Activated CD4-positive, alpha-beta T cell treated with anti-CD3 and anti-CD28 coated beads for 36 hours (primary cell): ENCODE measurements at regions of chr5 and their contacts with region 1.

Region 1: DNA sequence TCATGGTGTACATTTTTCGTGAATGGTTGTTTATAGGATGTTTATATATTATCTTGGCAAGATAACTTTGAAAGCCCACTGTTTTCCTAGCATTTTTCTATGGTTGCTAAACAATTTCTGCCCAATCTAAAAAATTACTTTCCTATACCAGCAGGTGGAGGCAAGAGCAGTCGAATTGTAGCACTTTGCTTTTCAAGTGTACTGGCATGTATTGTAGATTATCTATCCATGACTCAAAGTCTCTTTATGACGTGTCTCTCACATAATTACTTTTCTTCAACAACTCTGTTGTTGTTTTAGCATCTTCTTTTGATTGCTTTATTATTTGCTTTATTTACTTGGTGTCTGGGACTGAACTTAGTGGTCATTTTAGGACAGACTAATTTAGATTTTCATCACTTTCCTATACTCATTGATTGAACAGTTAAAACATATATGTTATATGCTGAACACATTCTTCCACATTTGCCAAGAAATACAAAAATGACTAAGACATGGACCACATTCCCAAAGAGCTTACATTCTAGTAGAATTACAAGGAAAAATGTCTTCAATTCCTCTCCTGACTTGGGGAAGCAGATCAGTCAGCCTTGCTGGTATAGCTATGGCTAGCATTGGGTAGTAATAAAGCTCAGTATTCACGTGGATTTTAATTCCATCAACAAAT is 20.7 kb downstream of the NLN start:
- DNase-seq: peak; percentile 47
- ATAC-seq: peak; percentile 95
- H3K4me3 Mint-ChIP-seq: no peak overlapping the region
- H3K27ac Mint-ChIP-seq: no peak overlapping the region
- H3K4me1 Mint-ChIP-seq: peaks cover 15% of the 10 kb centered on the region
- H3K27me3 Mint-ChIP-seq: no peaks in the 10 kb centered on the region

Region 2: GRCh38 chr5:65801352-65801783 is 58.7 kb after region 1 on chr5:
- CTCF ChIA-PET with region 1: no interaction called
- POLR2A ChIA-PET with region 1: interaction called, 3 read pairs
- intact Hi-C with region 1: loop called in 1 of 2 experiments (anchors 2 kb)
- DNase-seq: no peak
- ATAC-seq: no peak
- H3K4me3 Mint-ChIP-seq: no peak overlapping the region
- H3K27ac Mint-ChIP-seq: no peak overlapping the region
- H3K4me1 Mint-ChIP-seq: peaks cover 37% of the 10 kb centered on the region
- H3K27me3 Mint-ChIP-seq: peaks cover 2% of the 10 kb centered on the region

Region 3: GRCh38 chr5:65867542-65868200 is 125.0 kb after region 1 on chr5:
- CTCF ChIA-PET with region 1: no interaction called
- POLR2A ChIA-PET with region 1: no interaction called
- intact Hi-C with region 1: loop called in 1 of 2 experiments (anchors 2 kb)
- DNase-seq: no peak
- ATAC-seq: no peak
- H3K4me3 Mint-ChIP-seq: peak overlapping the region; percentile 9
- H3K27ac Mint-ChIP-seq: peak overlapping the region; percentile 69
- H3K4me1 Mint-ChIP-seq: peaks cover 28% of the 10 kb centered on the region
- H3K27me3 Mint-ChIP-seq: no peaks in the 10 kb centered on the region

Region 4: GRCh38 chr5:66002415-66002814 is 259.7 kb after region 1 on chr5:
- CTCF ChIA-PET with region 1: no interaction called
- POLR2A ChIA-PET with region 1: no interaction called
- intact Hi-C with region 1: loop called in 1 of 2 experiments (anchors 5 kb)
- DNase-seq: no peak
- ATAC-seq: peak; percentile 96
- H3K4me3 Mint-ChIP-seq: no peak overlapping the region
- H3K27ac Mint-ChIP-seq: peak overlapping the region; percentile 4
- H3K4me1 Mint-ChIP-seq: peaks cover 41% of the 10 kb centered on the region
- H3K27me3 Mint-ChIP-seq: no peaks in the 10 kb centered on the region

Region 5: DNA sequence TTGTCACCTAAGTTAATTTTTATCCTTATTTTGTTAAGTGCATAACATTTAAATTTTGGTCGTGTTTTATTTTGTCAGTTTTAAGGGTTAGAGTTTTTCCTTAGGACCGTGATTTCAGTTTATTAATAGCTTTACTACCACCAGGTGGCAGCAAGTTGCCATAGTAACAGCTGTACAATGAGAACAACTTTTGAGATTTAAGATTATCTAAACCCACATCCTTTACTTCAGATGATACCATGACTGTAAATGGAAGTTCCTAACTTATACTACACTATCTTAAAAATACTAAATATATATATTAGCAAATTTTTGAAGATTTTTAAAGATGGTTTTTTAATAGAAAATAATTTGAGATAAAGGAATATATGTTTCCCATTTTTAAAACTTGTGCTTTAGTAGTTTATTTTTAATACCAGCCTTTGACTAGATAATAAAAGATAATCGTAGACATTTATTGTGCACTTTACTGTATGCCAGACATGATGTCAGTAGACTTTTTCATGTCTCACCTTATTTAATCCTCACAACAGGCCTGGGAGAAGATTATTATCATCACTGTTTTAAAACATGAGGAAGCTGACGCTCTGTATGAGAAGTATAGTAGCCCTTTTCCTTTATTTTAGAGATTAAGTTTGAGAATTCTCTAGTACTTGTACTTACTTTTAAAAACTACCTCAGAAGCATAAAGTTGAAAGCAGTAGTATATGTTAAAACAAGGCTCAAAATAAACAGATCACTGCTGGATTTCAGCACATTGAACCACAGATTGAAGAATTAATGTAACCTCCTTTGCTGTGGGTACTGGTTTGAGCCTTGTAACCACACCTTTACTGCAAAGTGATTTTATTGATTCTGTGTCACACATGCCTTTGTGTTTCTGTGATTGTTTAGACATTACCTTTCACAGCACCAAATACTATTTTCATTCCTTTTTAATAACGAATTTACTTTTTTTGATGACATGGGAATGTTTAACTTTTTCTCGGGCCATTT is 428.9 kb after region 1 on chr5:
- CTCF ChIA-PET with region 1: no interaction called
- POLR2A ChIA-PET with region 1: no interaction called
- intact Hi-C with region 1: loop called in 1 of 2 experiments (anchors 5 kb)
- DNase-seq: peak; percentile 61
- ATAC-seq: peak; percentile 56
- H3K4me3 Mint-ChIP-seq: no peak overlapping the region
- H3K27ac Mint-ChIP-seq: no peak overlapping the region
- H3K4me1 Mint-ChIP-seq: peaks cover 28% of the 10 kb centered on the region
- H3K27me3 Mint-ChIP-seq: no peaks in the 10 kb centered on the region

Region 6: DNA sequence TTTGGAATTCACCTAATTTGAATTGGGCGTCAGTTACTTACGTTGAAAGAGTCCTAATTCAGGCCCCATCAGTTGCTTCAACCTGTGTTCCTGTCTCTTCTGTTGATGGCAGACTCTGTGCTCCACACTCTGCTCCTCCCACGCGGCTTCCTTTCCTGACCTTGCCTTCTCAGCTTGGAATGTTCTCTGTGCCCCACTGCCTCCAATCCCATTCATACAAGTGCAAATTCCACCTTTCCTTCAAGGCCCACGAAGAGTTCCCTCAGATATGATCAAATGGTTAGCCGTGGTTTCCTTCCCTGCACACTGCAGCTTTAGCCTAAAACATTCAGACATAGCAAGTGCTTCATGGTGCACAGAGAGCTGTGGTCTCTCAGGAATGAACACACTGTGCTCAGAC is 467.1 kb after region 1 on chr5:
- CTCF ChIA-PET with region 1: no interaction called
- POLR2A ChIA-PET with region 1: no interaction called
- intact Hi-C with region 1: loop called in 1 of 2 experiments (anchors 5 kb)
- DNase-seq: no peak
- ATAC-seq: no peak
- H3K4me3 Mint-ChIP-seq: no peak overlapping the region
- H3K27ac Mint-ChIP-seq: no peak overlapping the region
- H3K4me1 Mint-ChIP-seq: no peaks in the 10 kb centered on the region
- H3K27me3 Mint-ChIP-seq: no peaks in the 10 kb centered on the region